ENCODE measurements at regions of chr2 and their contacts with region 1.

Region 1: GRCh38 chr2:55617175-55618024 is at the start of gene PPP4R3B:
- DNase-seq: peak; percentile 96
- ATAC-seq: peak; percentile 81
- H3K4me3 Mint-ChIP-seq: no peak within 1 kb of the TSS
- H3K27ac Mint-ChIP-seq: no peak within 1 kb of the TSS
- H3K4me1 Mint-ChIP-seq: peaks cover 22% of the 10 kb centered on the region
- H3K27me3 Mint-ChIP-seq: no peaks in the 10 kb centered on the region
- CTCF ChIP-seq: no peak
- total RNA-seq, gene PPP4R3B: 75.6 and 82.4 TPM in 2 replicates

Region 2: GRCh38 chr2:53767405-53768241 is 1849.8 kb before region 1 on chr2 and contains the start of gene CHAC2:
- CTCF ChIA-PET with region 1: no interaction called
- POLR2A ChIA-PET with region 1: interaction called, 3 read pairs
- intact Hi-C with region 1: loop called (anchors 2 kb)
- DNase-seq: peak; percentile 82
- ATAC-seq: peak; percentile 92
- H3K4me3 Mint-ChIP-seq: peak within 1 kb of the TSS; percentile 95
- H3K27ac Mint-ChIP-seq: peak within 1 kb of the TSS; percentile 99
- H3K4me1 Mint-ChIP-seq: peaks cover 21% of the 10 kb centered on the region
- H3K27me3 Mint-ChIP-seq: no peaks in the 10 kb centered on the region
- CTCF ChIP-seq: no peak
- total RNA-seq, gene CHAC2: 7.0 and 7.6 TPM in 2 replicates

Region 3: GRCh38 chr2:53970724-53971602 is 1646.4 kb before region 1 on chr2 and contains the start of gene PSME4:
- CTCF ChIA-PET with region 1: no interaction called
- POLR2A ChIA-PET with region 1: no interaction called
- intact Hi-C with region 1: loop called (anchors 5 kb)
- DNase-seq: peak; percentile 97
- ATAC-seq: peak; percentile 90
- H3K4me3 Mint-ChIP-seq: peak within 1 kb of the TSS; percentile 94
- H3K27ac Mint-ChIP-seq: peak within 1 kb of the TSS; percentile 94
- H3K4me1 Mint-ChIP-seq: peaks cover 49% of the 10 kb centered on the region
- H3K27me3 Mint-ChIP-seq: no peaks in the 10 kb centered on the region
- CTCF ChIP-seq: no peak
- total RNA-seq, gene PSME4: 73.2 and 74.3 TPM in 2 replicates

Region 4: DNA sequence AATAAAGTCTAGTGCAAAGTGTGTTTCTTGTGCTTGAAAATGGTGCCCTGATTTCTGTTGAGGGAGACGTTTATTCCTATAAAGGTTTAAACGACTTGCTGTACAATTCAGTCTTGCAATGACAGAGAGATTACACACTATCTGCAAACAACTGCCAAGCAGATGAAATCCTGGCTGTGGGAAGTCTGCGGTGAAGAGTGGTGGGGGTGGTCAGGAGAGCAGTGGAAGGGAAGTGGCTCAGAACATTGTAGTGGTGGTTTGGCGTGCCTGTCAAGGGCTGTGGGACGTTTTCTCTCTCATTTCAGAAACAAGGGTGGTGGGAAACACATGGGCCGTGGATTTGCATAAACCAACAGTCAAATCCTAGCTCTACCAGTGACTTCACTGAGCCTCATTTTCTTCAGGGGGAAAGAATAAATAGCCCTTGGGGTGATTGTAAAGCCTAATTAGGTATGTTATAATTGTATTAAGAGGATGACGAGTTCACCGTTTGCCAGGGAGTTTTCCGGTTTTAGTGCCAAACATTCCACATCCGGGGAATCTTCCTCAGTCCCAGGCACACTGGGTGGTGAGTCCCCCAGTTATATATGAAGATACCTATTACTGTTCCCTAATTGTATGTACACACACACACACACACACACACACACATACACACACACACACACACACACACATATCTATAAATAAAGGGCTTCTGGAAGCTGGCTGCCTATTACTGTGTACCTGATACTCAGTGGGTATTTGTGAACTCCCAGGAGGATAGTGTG is 1046.3 kb before region 1 on chr2:
- CTCF ChIA-PET with region 1: no interaction called
- POLR2A ChIA-PET with region 1: no interaction called
- intact Hi-C with region 1: loop called (anchors 5 kb)
- DNase-seq: no peak
- ATAC-seq: peak; percentile 49
- H3K4me3 Mint-ChIP-seq: peak overlapping the region; percentile 52
- H3K27ac Mint-ChIP-seq: peak overlapping the region; percentile 94
- H3K4me1 Mint-ChIP-seq: peaks cover 96% of the 10 kb centered on the region
- H3K27me3 Mint-ChIP-seq: no peaks in the 10 kb centered on the region
- CTCF ChIP-seq: no peak

Region 5: DNA sequence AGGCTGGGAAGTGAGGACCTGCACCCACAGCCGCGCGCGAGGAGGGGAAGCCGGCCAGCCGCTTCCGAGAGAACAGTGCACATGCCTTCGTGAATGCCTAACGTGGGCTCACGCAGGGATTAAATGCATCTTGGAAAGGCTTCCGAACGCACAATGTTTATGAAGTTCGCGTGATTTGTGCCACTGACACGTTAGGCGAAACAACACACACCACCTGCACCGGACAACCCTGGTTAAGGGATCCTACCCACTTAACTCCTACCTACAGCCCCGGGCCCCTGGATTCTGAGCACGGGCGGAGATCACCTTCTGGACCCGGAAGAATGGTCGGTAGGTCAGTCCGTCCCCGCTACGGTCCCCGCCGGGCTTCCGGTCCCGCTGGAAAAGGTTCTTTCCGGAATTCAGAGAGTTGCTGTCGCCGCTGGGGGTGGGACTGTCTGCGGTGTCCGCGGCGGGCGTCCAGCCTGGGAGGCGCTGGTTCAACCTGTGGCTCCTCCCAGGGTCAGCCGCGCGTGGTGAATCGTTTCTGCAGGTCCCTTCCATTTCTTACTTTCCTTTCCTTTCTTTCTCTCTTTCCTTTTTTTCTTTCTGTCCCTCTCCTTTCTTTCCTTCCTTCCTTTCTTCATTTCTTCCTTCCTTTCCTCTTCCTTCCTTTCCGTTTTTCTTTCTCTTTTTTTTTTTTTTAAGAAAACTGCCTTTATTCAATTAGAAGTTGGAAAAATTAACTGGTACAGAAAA is 348.3 kb before region 1 on chr2 and contains the start of gene MTIF2:
- CTCF ChIA-PET with region 1: no interaction called
- POLR2A ChIA-PET with region 1: interaction called, 3 read pairs
- intact Hi-C with region 1: loop called (anchors 2 kb)
- DNase-seq: peak; percentile 88
- ATAC-seq: peak; percentile 96
- H3K4me3 Mint-ChIP-seq: peak within 1 kb of the TSS; percentile 94
- H3K27ac Mint-ChIP-seq: peak within 1 kb of the TSS; percentile 94
- H3K4me1 Mint-ChIP-seq: peaks cover 13% of the 10 kb centered on the region
- H3K27me3 Mint-ChIP-seq: no peaks in the 10 kb centered on the region
- CTCF ChIP-seq: no peak
- total RNA-seq, gene MTIF2: 37.8 and 40.4 TPM in 2 replicates

Region 6: GRCh38 chr2:55419679-55420438 is 197.5 kb before region 1 on chr2 and contains the start of gene CCDC88A:
- CTCF ChIA-PET with region 1: no interaction called
- POLR2A ChIA-PET with region 1: no interaction called
- intact Hi-C with region 1: loop called (anchors 2 kb)
- DNase-seq: peak; percentile 86
- ATAC-seq: peak; percentile 87
- H3K4me3 Mint-ChIP-seq: peak within 1 kb of the TSS; percentile 95
- H3K27ac Mint-ChIP-seq: peak within 1 kb of the TSS; percentile 92
- H3K4me1 Mint-ChIP-seq: peaks cover 46% of the 10 kb centered on the region
- H3K27me3 Mint-ChIP-seq: no peaks in the 10 kb centered on the region
- CTCF ChIP-seq: no peak
- total RNA-seq, gene CCDC88A: 25.6 and 35.6 TPM in 2 replicates

Region 7: GRCh38 chr2:55693181-55694134 is 76.1 kb after region 1 on chr2 and contains the start of gene PNPT1:
- CTCF ChIA-PET with region 1: no interaction called
- POLR2A ChIA-PET with region 1: interaction called, 3 read pairs
- intact Hi-C with region 1: loop called (anchors 1 kb)
- DNase-seq: peak; percentile 87
- ATAC-seq: peak; percentile 100
- H3K4me3 Mint-ChIP-seq: peak within 1 kb of the TSS; percentile 96
- H3K27ac Mint-ChIP-seq: peak within 1 kb of the TSS; percentile 79
- H3K4me1 Mint-ChIP-seq: peaks cover 30% of the 10 kb centered on the region
- H3K27me3 Mint-ChIP-seq: no peaks in the 10 kb centered on the region
- CTCF ChIP-seq: no peak
- total RNA-seq, gene PNPT1: 26.6 and 35.8 TPM in 2 replicates